ENCODE measurements at regions of chr9 and their contacts with region 1.

Region 1: GRCh38 chr9:26955921-26956859 is at the start of gene IFT74:
- DNase-seq: peak; percentile 99
- H3K4me3 ChIP-seq: peak within 1 kb of the TSS; percentile 66 to 67
- H3K27ac ChIP-seq: peak within 1 kb of the TSS; percentile 80 to 92
- H3K4me1 ChIP-seq: peaks cover 11% of the 10 kb centered on the region
- H3K27me3 ChIP-seq: no peaks in the 10 kb centered on the region
- CTCF ChIP-seq: no peak
- POLR2A ChIP-seq: no peak
- total RNA-seq, gene IFT74: 30.2 to 37.5 TPM

Region 2: DNA sequence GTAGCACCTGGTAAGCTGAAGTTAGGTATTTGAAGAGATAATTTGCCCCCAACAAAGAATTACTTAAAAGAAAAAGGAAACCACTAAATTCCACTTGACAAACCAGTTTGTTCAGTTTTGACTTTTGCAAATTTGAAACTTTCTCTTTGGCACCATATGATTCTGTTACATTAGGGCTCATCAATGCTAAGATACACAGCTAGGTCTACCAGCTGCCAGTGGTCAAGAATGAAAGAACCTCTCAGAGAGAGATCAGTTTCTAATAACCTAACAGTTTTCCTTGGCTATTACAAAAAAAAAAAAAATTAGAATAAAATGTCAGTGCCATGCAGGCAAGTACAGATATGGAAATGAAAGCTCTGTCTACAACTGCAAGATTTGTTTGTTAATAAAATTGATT is 155.9 kb before region 1 on chr9:
- intact Hi-C with region 1: no loop called
- DNase-seq: no peak
- H3K4me3 ChIP-seq: no peak overlapping the region
- H3K27ac ChIP-seq: no peak overlapping the region
- H3K4me1 ChIP-seq: no peaks in the 10 kb centered on the region
- H3K27me3 ChIP-seq: no peaks in the 10 kb centered on the region
- CTCF ChIP-seq: no peak
- POLR2A ChIP-seq: no peak

Region 3: GRCh38 chr9:26892251-26893029 is 63.8 kb before region 1 on chr9 and contains the start of gene CAAP1:
- intact Hi-C with region 1: loop called (anchors 5 kb)
- DNase-seq: peak; percentile 96
- H3K4me3 ChIP-seq: peak within 1 kb of the TSS; percentile 89 to 90
- H3K27ac ChIP-seq: peak within 1 kb of the TSS; percentile 90 to 91
- H3K4me1 ChIP-seq: no peaks in the 10 kb centered on the region
- H3K27me3 ChIP-seq: no peaks in the 10 kb centered on the region
- CTCF ChIP-seq: peak in 2 of 3 experiments; percentile 9 to 19
- POLR2A ChIP-seq: no peak
- total RNA-seq, gene CAAP1: 25.1 to 27.6 TPM